ENCODE measurements at regions of chr14 and their contacts with region 1.

Region 1: GRCh38 chr14:50927987-50928635 is 16.2 kb downstream of the PYGL start:
- DNase-seq: no peak
- H3K4me3 ChIP-seq: no peak overlapping the region
- H3K27ac ChIP-seq: peak overlapping the region in 2 of 5 donors; percentile 50 to 67
- H3K4me1 ChIP-seq: peaks cover 0 to 13% (median 0%) of the 10 kb centered on the region in 4 donors
- H3K27me3 ChIP-seq: no peaks in the 10 kb centered on the region
- CTCF ChIP-seq: no peak
- EP300 ChIP-seq: no peak
- POLR2A ChIP-seq: no peak

Region 2: GRCh38 chr14:50688875-50689274 is 239.2 kb before region 1 on chr14:
- intact Hi-C with region 1: loop called (anchors 5 kb)
- DNase-seq: no peak
- H3K4me3 ChIP-seq: no peak overlapping the region
- H3K27ac ChIP-seq: no peak overlapping the region
- H3K4me1 ChIP-seq: no peaks in the 10 kb centered on the region
- H3K27me3 ChIP-seq: no peaks in the 10 kb centered on the region
- CTCF ChIP-seq: no peak
- EP300 ChIP-seq: no peak
- POLR2A ChIP-seq: no peak